Motor neuron (in vitro differentiated cells): ENCODE measurements at regions of chr2 and their contacts with region 1.

Region 1: GRCh38 chr2:236512902-236513435 is 56.7 kb upstream of the ACKR3 start:
- ATAC-seq: peak; percentile 72 to 99 (median 84)
- H3K4me3 ChIP-seq: no peak overlapping the region
- H3K27ac ChIP-seq: no peak overlapping the region
- H3K4me1 ChIP-seq: peaks cover 4 to 17% of the 10 kb centered on the region in 2 donors

Region 2: GRCh38 chr2:235493402-235493774 is 1019.6 kb before region 1 on chr2:
- in situ Hi-C with region 1: no loop called
- ATAC-seq: peak in 6 of 8 experiments; percentile 39 to 57 (median 44)
- H3K4me3 ChIP-seq: peak overlapping the region; percentile 52 to 72 (median 70)
- H3K27ac ChIP-seq: no peak overlapping the region
- H3K4me1 ChIP-seq: peaks cover 26 to 27% of the 10 kb centered on the region in 2 donors

Region 3: DNA sequence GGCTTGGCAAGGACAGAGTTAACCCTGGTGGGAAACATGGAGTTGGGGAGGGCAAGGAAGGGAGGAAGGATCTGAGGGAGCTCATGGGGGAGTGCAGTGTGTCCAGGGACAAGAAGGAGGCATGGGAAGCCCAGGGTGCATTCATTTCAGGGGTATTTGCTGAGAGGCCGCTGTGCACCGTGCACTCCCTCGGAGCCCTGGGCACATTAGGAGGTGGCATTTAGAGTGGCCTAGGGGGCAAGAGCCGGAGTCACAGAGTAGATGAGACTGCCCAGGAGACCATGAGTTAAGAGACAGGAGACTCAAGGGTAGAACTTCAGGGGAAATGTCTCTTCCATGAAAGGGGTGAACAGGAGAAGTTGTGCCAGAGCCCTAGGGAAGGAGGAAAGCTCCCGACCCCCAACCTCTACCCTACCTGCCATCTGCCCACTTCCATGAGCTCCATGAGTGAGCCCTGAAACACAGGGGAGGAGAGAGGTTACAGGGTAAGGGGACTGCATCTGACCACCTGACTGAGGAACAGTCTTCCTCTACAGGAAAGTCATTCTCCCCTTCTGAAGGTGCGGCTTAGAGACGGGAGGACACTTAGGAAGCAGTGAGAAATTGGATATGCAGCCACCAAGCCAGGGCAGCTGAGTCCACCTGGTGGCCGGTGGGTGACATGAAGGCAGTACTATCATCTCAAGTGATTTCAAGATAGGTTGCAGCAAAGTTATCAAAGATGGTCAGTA is 514.2 kb after region 1 on chr2:
- in situ Hi-C with region 1: loop called in 1 of 9 experiments (anchors 25 kb)
- ATAC-seq: peak; percentile 75 to 99 (median 88)
- H3K4me3 ChIP-seq: no peak overlapping the region
- H3K27ac ChIP-seq: no peak overlapping the region
- H3K4me1 ChIP-seq: peaks cover 0 to 5% of the 10 kb centered on the region in 2 donors